ENCODE measurements at regions of chr11 and their contacts with region 1.

Region 1: GRCh38 chr11:69943066-69943465 is 123.8 kb upstream of the FGF3 start:
- DNase-seq: peak; percentile 41
- ATAC-seq: peak; percentile 83
- H3K4me3 ChIP-seq: no peak overlapping the region
- H3K27ac ChIP-seq: no peak overlapping the region
- H3K4me1 ChIP-seq: no peaks in the 10 kb centered on the region
- H3K27me3 ChIP-seq: peaks cover 5 to 30% of the 10 kb centered on the region in 2 experiments; a peak in 4 of 5 replicates
- CTCF ChIP-seq: peak; percentile 69
- EP300 ChIP-seq: no peak
- POLR2A ChIP-seq: no peak
- RAD21 ChIP-seq: peak; percentile 41; the same call in 1 of the 2 replicates

Region 2: DNA sequence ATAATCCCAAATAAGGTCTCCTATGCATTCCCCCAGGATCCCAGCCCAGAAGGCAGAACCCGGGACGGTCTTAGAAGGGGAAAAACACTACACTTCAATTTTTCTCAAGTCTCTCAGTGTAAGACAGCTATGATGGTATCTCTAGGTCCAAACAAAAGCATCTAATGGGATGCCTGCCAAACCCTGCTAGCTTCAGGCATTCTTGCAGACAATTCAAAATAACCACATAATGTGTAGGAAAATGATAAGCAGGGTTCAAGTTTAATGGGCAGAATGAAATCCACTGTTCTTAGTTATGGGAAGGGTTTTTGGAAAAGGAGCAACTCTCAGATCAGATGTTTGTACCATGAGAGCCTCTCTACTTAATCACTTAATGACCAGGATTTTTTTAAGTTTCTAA is 15.2 kb after region 1 on chr11:
- CTCF ChIA-PET with region 1: no interaction called
- POLR2A ChIA-PET with region 1: no interaction called
- in situ Hi-C with region 1: no loop called
- intact Hi-C with region 1: no loop called
- DNase-seq: no peak
- ATAC-seq: no peak
- H3K4me3 ChIP-seq: no peak overlapping the region
- H3K27ac ChIP-seq: no peak overlapping the region
- H3K4me1 ChIP-seq: no peaks in the 10 kb centered on the region
- H3K27me3 ChIP-seq: peaks cover 8 to 67% of the 10 kb centered on the region in 2 experiments; a peak in 4 of 5 replicates
- CTCF ChIP-seq: no peak
- EP300 ChIP-seq: no peak
- POLR2A ChIP-seq: no peak
- RAD21 ChIP-seq: no peak

Region 3: DNA sequence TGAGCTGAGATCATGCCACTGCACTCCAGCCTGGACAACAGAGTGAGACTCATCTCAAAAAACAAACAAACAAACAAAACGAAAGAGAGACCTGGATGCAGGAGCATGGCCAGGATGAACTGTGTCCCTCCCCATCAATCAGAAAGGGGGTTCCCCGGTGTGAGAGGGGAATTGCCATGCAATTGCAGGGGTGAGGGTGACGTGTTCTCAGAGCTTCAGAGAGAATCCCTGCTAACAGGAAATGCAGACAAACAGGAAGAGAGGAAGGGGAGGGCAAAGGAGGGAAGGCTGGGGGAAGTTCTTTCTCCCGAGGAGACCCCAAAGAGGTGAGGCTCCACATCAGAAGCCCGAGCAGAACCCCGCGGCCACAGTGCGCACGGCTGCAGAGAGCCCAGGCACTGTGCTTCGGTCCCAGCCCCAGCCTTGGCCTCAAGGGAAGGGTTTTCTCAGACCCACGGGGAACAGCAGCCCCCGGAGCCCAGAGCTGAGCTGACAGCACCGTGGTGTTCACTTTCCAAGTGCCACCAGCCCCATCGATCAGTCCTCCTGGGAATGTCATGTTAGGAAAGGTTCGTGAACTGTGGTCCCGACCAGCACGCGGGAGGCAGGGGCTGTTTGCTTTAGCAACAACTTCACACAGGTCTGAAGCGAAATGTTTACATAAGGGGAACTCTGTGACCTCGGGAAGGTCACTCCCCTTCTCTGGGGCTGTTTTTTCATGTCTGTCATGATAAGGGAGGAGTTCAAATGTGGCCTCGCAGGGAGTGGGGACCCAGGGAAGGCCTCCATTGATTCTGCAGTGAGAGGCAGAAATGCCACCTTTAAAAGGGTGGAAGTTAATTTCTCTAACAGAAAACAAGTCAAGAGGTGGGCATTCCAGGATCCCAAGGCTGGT is 27.1 kb after region 1 on chr11:
- CTCF ChIA-PET with region 1: no interaction called
- POLR2A ChIA-PET with region 1: no interaction called
- in situ Hi-C with region 1: no loop called
- intact Hi-C with region 1: loop called (anchors 1 kb)
- DNase-seq: peak; percentile 97
- ATAC-seq: peak; percentile 87
- H3K4me3 ChIP-seq: peak overlapping the region in 1 of 3 experiments; percentile 46; a peak in 2 of 6 replicates
- H3K27ac ChIP-seq: peak overlapping the region; percentile 59
- H3K4me1 ChIP-seq: peaks cover 35% of the 10 kb centered on the region
- H3K27me3 ChIP-seq: peaks cover 18 to 72% of the 10 kb centered on the region in 2 experiments; a peak in 4 of 5 replicates
- CTCF ChIP-seq: peak; percentile 22; the same call in 1 of the 2 replicates
- EP300 ChIP-seq: peak; percentile 89 to 93
- POLR2A ChIP-seq: no peak
- RAD21 ChIP-seq: peak; percentile 48; the same call in 1 of the 2 replicates

Region 4: GRCh38 chr11:70082829-70083228 is 139.8 kb after region 1 on chr11:
- CTCF ChIA-PET with region 1: interaction called, 6 read pairs
- POLR2A ChIA-PET with region 1: no interaction called
- in situ Hi-C with region 1: loop called (anchors 5 kb)
- intact Hi-C with region 1: no loop called
- DNase-seq: no peak
- ATAC-seq: 0 out of 3 replicates have a peak, but pooled peaks have one; percentile 14
- H3K4me3 ChIP-seq: no peak overlapping the region
- H3K27ac ChIP-seq: no peak overlapping the region
- H3K4me1 ChIP-seq: peaks cover 6% of the 10 kb centered on the region
- H3K27me3 ChIP-seq: peaks cover 6 to 40% of the 10 kb centered on the region in 2 experiments; a peak in 4 of 5 replicates
- CTCF ChIP-seq: peak; percentile 52
- EP300 ChIP-seq: no peak
- POLR2A ChIP-seq: no peak
- RAD21 ChIP-seq: no peak; the same call in 1 of the 2 replicates